ENCODE measurements at regions of chr1 and their contacts with region 1.

Region 1: DNA sequence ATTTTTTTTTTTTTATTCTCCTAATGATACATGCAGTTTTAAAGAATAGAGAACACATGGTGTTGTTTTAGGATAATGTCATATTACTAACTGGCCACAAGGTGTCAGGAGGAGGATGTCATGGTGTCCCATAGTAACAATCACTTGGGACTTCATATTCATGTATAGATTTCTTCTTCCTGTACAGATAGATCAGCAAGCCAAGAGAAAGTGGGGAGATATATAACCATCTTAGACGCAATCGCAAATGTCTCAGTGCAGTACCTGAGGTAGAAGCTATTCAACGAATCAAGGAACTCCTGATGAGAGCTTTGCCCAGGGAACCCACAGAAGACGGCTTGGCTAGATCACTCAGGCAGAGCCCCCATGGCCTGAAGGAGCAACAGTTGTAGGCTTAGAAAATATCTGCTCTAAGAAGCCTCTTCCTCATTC is 12.3 kb downstream of the OR2T11 start:
- DNase-seq: no peak
- ATAC-seq: no peak
- H3K4me3 ChIP-seq: no peak overlapping the region
- H3K27ac ChIP-seq: no peak overlapping the region
- H3K4me1 ChIP-seq: no peaks in the 10 kb centered on the region
- H3K27me3 ChIP-seq: no peaks in the 10 kb centered on the region

Region 2: GRCh38 chr1:248686815-248687214 is 64.2 kb after region 1 on chr1:
- intact Hi-C with region 1: loop called in 1 of 2 experiments (anchors 10 kb)
- DNase-seq: no peak
- ATAC-seq: no peak
- H3K4me3 ChIP-seq: no peak overlapping the region
- H3K27ac ChIP-seq: no peak overlapping the region
- H3K4me1 ChIP-seq: no peaks in the 10 kb centered on the region
- H3K27me3 ChIP-seq: no peaks in the 10 kb centered on the region

Region 3: DNA sequence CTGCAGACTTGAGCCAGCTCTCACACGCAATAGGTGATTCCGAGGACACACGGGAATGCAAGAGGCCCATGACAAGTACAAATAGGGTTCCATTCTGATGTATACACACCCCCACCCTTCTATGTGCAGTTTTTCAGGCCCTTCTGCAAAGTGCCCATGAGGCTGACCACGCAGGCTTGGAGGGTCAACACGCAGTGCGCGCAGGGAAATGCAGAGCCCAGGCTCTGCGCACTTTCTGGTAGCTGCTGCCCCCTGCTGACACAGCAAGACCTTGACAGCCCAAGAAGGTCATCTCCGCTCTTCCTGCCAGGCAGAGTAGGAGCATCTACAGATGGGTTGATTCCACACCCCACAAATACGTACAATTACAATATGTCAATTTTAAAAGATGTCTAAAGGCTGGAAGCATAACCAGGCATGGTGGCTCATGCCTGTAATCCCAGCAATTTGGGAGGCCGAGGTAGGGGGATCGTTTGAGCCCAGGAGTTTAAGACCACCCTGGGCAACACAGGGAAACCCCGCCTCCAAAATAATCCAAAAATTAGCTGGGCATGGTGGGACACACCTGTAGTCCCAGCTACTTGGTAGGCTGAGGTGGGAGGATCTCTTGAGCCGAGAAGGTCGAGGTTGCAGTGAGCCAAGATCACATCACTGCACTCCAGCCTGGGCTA is 184.6 kb after region 1 on chr1:
- intact Hi-C with region 1: loop called in 1 of 2 experiments (anchors 5 kb)
- DNase-seq: peak in 1 of 2 donors; percentile 78
- ATAC-seq: no peak
- H3K4me3 ChIP-seq: no peak overlapping the region
- H3K27ac ChIP-seq: no peak overlapping the region
- H3K4me1 ChIP-seq: no peaks in the 10 kb centered on the region
- H3K27me3 ChIP-seq: no peaks in the 10 kb centered on the region